ENCODE measurements at regions of chr17 and their contacts with region 1.

Region 1: DNA sequence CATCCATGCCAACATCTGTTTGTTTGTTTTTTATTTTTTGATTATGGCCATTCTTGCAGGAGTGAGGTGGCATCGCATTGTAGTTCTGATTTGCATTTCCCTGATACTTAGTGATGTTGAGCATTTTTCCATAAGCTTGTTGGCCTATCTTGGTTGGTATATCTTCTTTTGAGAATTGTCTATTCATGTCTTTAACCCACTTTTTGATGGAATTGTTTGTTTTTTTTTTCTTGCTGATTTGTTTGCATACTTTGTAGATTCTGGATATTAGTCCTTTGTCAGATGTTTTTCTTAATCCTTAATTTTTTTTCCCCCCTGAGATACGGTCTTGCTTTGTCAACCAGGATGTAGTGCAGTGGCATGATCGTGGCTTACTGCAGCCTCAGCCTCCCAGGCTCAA is 43.0 kb downstream of the RNF135 start:
- DNase-seq: no peak
- ATAC-seq: no peak
- H3K4me3 ChIP-seq: no peak overlapping the region
- H3K27ac ChIP-seq: no peak overlapping the region
- H3K4me1 ChIP-seq: peaks cover 4% of the 10 kb centered on the region; the same call in 1 of the 2 replicates
- H3K27me3 ChIP-seq: no peaks in the 10 kb centered on the region
- CTCF ChIP-seq: no peak

Region 2: DNA sequence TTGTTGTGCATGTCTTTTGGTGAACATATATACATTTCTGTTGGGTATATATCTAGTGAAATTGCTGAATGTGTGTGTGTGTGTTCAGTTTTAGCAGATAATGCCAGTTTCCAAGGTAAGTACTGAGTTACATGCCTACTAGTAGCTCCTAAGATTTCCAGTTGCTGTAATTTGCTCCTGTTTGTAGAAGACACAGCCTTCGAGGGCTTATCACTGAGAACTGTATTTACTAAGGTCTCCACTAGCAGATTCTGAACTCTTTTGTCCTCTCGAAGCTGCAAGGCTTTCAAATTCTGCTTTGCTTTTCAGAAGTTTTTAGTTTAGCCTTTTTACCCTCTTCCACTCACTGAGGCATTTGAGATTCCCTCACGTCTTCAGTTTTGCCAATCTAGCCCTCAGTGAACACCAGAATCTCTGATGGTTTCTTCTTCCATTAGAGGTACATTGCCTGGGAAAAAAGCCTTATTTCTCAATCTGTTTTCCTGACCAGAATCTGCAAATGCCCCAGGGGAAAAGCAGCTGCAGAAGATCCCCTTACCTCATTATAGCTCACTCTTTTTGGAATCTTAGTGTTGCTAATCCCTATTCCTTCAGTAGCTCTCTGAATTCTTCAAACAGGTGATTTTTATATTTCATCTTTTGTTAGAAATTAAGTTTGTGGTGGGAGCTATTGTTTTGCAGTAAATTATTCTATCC is 133.8 kb after region 1 on chr17:
- CTCF ChIA-PET with region 1: no interaction called
- POLR2A ChIA-PET with region 1: no interaction called
- intact Hi-C with region 1: no loop called
- DNase-seq: no peak
- ATAC-seq: no peak
- H3K4me3 ChIP-seq: no peak overlapping the region
- H3K27ac ChIP-seq: no peak overlapping the region
- H3K4me1 ChIP-seq: no peaks in the 10 kb centered on the region
- H3K27me3 ChIP-seq: no peaks in the 10 kb centered on the region
- CTCF ChIP-seq: no peak

Region 3: DNA sequence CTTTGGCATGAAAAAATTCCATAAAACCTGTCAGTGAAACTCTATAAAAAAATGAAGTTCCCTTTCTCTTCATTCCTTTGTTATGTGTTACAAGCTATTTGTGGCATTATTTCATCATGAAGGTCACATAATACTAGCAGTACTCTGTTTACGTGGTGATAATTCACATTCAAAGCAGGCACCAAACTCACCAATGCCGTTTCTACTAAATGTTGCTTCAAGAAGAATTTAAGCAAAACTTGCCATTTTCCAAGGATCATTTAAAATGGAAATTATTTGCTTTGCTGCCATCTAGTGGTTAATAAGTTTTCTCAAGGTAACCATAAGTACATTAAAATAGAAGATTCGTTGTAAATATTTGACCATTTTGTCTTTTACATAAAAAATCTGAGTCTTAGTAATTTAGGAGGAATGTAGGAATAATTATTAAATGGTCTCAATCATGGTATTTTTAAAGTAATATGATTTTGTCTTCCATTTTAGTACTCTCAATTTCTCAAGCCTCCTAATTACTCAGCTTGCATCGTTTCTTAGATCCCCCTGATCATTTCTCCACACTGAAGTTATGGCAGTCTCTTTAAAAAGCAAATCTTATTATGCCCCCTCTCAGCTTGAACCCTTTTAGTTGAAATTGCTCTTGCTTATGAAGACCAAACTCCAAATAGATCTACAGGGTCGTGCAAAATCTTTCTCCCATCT is 202.4 kb after region 1 on chr17:
- CTCF ChIA-PET with region 1: no interaction called
- POLR2A ChIA-PET with region 1: no interaction called
- intact Hi-C with region 1: loop called (anchors 2 kb)
- DNase-seq: peak; percentile 62
- ATAC-seq: no peak
- H3K4me3 ChIP-seq: no peak overlapping the region
- H3K27ac ChIP-seq: no peak overlapping the region
- H3K4me1 ChIP-seq: peaks cover 3% of the 10 kb centered on the region; the same call in 1 of the 2 replicates
- H3K27me3 ChIP-seq: no peaks in the 10 kb centered on the region
- CTCF ChIP-seq: peak; percentile 68

Region 4: DNA sequence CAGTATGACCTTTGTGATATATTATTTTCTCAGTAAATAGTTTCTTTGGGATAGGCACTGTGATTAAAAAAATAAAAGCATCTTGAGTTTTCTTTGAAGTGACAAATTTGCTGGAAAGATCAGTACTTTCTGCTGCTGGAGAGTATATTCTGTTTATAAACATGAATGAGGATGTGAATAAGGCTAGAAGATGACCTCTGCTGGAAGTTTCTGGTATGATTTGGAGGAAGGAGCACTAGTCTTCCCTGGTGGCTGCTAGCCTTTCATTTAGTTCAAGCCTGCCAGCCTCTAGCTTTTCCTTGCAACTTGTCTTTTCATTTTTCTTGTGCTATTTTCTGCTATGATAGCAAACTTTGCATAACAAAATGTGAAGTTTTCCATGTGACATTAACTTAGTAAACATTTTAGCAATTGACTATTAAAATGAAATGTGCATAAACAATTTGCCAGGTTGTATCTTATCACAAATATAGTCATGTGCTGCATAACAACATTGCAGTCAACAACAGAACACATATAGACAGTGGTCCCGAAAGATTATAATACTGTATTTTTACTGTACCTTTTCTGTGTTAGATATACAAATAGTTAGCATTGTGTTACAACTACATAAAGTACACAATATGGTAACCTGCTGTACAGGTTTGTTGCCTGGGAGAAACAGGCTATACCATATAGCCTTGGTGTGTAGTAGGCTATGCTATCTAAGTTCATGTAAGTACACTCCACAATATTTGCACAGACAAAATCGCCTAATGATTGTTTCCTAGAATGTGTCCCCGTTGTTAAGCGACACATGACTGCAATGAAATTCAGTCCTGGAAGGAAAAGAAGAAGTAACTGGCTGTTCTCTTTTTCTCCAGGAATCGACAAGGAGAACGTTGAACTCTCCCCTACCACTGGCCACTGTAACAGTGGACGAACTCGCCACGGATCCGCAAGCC is 359.6 kb after region 1 on chr17:
- CTCF ChIA-PET with region 1: no interaction called
- POLR2A ChIA-PET with region 1: no interaction called
- intact Hi-C with region 1: loop called (anchors 5 kb)
- DNase-seq: peak; percentile 62
- ATAC-seq: peak; percentile 70
- H3K4me3 ChIP-seq: no peak overlapping the region
- H3K27ac ChIP-seq: no peak overlapping the region
- H3K4me1 ChIP-seq: no peaks in the 10 kb centered on the region
- H3K27me3 ChIP-seq: no peaks in the 10 kb centered on the region
- CTCF ChIP-seq: peak; percentile 61

Measured in PC-3 (cell line).